AG04449 (cell line): ENCODE measurements at regions of chr4 and their contacts with region 1.

Region 1: GRCh38 chr4:82373816-82374625 is at the start of gene HNRNPD:
- DNase-seq: peak; percentile 97
- H3K4me3 ChIP-seq: peak within 1 kb of the TSS; percentile 95
- CTCF ChIP-seq: no peak

Region 2: GRCh38 chr4:82360298-82361177 is 13.5 kb before region 1 on chr4:
- CTCF ChIA-PET with region 1: interaction called, 41 read pairs
- POLR2A ChIA-PET with region 1: interaction called, 3 read pairs
- DNase-seq: no peak
- H3K4me3 ChIP-seq: no peak overlapping the region
- CTCF ChIP-seq: peak; percentile 39

Region 3: GRCh38 chr4:82428969-82429727 is 55.1 kb after region 1 on chr4:
- CTCF ChIA-PET with region 1: interaction called, 9 read pairs
- POLR2A ChIA-PET with region 1: interaction called, 26 read pairs
- DNase-seq: no peak
- H3K4me3 ChIP-seq: peak overlapping the region; percentile 96
- CTCF ChIP-seq: peak; percentile 76